Uterus (tissue), 4 donors: ENCODE measurements at regions of chr13 and their contacts with region 1.

Region 1: GRCh38 chr13:44917589-44918325 is 71.5 kb downstream of the NUFIP1 start:
- DNase-seq: peak; percentile 98
- H3K4me3 ChIP-seq: peak overlapping the region; percentile 45 to 53
- H3K27ac ChIP-seq: peak overlapping the region; percentile 88 to 99
- H3K4me1 ChIP-seq: peaks cover 0 to 4% of the 10 kb centered on the region in 2 donors
- H3K27me3 ChIP-seq: no peaks in the 10 kb centered on the region
- CTCF ChIP-seq: peak; percentile 27 to 68 (median 44)
- POLR2A ChIP-seq: peak; percentile 78 to 82

Region 2: DNA sequence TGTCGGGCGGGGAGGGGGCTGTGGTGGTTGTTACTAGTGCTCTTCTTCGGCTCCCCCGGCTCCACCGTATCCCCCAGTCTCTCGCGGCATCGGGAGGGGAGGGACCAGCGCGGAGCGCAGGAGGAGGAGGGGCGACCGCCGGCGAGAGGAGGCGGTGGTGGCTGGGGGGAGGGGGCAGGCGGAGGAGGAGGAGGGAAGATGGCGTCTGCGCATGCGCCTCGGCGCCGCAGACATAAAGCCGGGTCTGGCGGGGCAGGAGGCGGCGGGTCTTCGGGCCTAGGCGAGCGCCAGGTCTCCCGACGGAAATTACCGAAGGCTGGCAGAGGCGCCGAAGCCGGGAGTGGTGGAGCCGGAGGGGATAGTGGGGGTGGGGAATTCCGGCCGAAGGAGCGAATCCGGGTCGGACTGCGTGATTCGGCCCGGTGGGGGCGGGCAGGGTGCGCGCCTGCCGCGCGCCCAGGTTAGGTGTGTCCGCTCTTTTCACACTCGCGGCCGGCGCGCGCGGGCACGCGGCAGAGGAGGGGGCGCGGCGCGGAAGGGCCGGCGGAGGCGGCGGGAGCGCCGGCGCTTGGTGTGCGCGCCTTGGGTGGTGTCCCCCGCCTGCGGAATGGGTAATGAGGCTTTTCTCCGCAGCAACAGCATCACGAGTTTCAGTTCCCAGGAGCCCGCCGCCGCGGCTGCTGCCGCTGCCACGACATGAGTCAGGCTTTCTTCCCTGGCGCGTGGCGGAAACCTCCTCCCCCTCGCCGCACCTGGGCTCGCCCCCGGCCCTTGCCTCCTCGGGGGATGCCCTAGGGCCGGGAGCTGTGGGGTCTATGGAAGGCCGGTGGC is 340.3 kb before region 1 on chr13:
- intact Hi-C with region 1: loop called (anchors 10 kb)
- DNase-seq: peak; percentile 97
- H3K4me3 ChIP-seq: peak overlapping the region; percentile 71 to 73
- H3K27ac ChIP-seq: peak overlapping the region; percentile 95 to 99
- H3K4me1 ChIP-seq: peaks cover 0 to 13% of the 10 kb centered on the region in 2 donors
- H3K27me3 ChIP-seq: no peaks in the 10 kb centered on the region
- CTCF ChIP-seq: no peak
- POLR2A ChIP-seq: peak; percentile 49 to 76